ENCODE measurements at regions of chr19 and their contacts with region 1.

Region 1: GRCh38 chr19:36060430-36060829 is 5.7 kb downstream of the WDR62 start:
- DNase-seq: no peak
- H3K4me3 ChIP-seq: no peak overlapping the region
- CTCF ChIP-seq: peak; percentile 89

Region 2: GRCh38 chr19:36073121-36073872 is 12.9 kb after region 1 on chr19:
- CTCF ChIA-PET with region 1: interaction called, 30 read pairs
- POLR2A ChIA-PET with region 1: interaction called, 3 read pairs
- DNase-seq: no peak
- H3K4me3 ChIP-seq: no peak overlapping the region
- CTCF ChIP-seq: no peak

Region 3: GRCh38 chr19:36081385-36081784 is 21.0 kb after region 1 on chr19:
- CTCF ChIA-PET with region 1: interaction called, 30 read pairs
- POLR2A ChIA-PET with region 1: no interaction called
- DNase-seq: no peak
- H3K4me3 ChIP-seq: no peak overlapping the region
- CTCF ChIP-seq: no peak

Region 4: GRCh38 chr19:36183245-36183628 is 122.8 kb after region 1 on chr19:
- CTCF ChIA-PET with region 1: no interaction called
- POLR2A ChIA-PET with region 1: no interaction called
- DNase-seq: no peak
- H3K4me3 ChIP-seq: no peak overlapping the region
- CTCF ChIP-seq: no peak

Measured in AG04449 (cell line).